H1 (cell line): ENCODE measurements at regions of chr7 and their contacts with region 1.

Region 1: DNA sequence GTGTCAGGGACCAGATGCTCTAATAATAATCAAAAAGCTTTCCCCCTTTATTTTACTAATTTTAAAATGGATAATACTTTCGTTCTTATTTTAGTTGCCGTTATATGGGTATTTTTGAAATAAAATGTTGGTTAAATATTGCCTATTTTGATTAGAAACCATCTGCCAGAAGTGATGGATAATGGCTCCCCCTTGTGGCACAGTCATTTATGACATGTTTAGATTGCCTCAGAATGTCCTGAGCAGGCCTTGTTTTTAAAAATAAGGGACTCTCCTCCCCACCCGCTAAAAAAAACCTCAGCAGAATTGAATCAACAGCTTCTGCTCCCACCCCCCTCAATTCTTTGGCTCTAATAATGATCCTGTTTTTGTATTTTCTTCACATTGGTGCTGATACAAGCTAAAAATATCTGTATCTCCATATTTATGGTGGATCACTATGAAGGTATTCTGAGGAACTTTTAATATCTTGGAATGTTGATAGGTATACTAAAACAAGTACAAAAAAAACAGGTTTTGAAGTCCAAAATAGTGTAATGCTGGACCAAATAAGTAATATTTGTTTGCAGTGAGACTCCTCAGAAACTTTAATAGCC is 38.8 kb downstream of the TMEM60 start:
- DNase-seq: peak; percentile 10 to 78
- H3K4me3 ChIP-seq: no peak overlapping the region
- H3K27ac ChIP-seq: no peak overlapping the region
- H3K4me1 ChIP-seq: no peaks in the 10 kb centered on the region
- H3K27me3 ChIP-seq: no peaks in the 10 kb centered on the region
- CTCF ChIP-seq: peak in 2 of 3 experiments; percentile 62 to 69; a peak in 2 of 4 replicates
- EP300 ChIP-seq: no peak
- POLR2A ChIP-seq: no peak
- RAD21 ChIP-seq: peak; percentile 84 to 88

Region 2: GRCh38 chr7:77651573-77652162 is 107.7 kb before region 1 on chr7:
- CTCF ChIA-PET with region 1: interaction called, 48 read pairs
- POLR2A ChIA-PET with region 1: interaction called, 3 read pairs
- DNase-seq: peak in 1 of 2 experiments; percentile 44
- H3K4me3 ChIP-seq: no peak overlapping the region
- H3K27ac ChIP-seq: no peak overlapping the region
- H3K4me1 ChIP-seq: no peaks in the 10 kb centered on the region
- H3K27me3 ChIP-seq: no peaks in the 10 kb centered on the region
- CTCF ChIP-seq: peak in 2 of 3 experiments; percentile 54; a peak in 2 of 4 replicates
- EP300 ChIP-seq: no peak
- POLR2A ChIP-seq: no peak
- RAD21 ChIP-seq: peak; percentile 56 to 63

Region 3: DNA sequence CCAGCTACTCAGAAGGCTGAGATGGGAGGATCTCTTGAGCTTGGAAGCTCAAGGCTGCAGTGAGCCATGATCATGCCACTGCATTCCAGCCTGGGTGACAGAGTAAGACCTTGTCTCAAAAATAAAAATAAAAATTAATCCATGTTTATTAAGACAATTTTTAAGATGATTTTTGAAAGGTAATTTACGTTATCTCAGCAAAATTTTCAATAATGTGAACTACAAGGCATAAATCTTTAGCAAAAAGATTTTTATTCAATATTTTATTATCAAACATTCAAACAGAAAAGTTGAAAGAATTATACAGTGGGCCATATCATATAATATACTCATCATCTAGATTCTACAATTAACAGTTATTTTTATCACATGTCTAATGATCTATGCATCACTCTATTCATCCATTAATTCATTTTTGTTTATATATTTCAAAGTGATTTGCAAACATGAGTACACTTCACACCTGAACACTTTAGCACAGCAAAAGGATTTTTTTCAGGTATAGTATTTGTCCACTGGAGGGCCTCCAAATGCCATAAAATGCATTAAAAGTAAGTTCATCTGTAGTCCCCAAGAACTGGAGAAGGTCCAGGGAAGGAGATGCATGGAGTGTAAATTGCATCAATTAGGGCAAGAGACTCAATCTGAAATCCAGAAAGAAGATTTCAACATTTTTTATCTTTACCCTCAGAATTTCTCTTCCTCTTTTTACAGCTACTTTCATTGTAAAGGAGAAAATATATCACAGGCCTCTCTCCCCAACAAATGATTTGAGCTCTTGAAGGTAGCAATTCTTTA is 101.8 kb before region 1 on chr7:
- CTCF ChIA-PET with region 1: interaction called, 48 read pairs
- POLR2A ChIA-PET with region 1: interaction called, 3 read pairs
- DNase-seq: no peak
- H3K4me3 ChIP-seq: no peak overlapping the region
- H3K27ac ChIP-seq: no peak overlapping the region
- H3K4me1 ChIP-seq: no peaks in the 10 kb centered on the region
- H3K27me3 ChIP-seq: no peaks in the 10 kb centered on the region
- CTCF ChIP-seq: peak in 2 of 3 experiments; percentile 30 to 45; a peak in 2 of 4 replicates
- EP300 ChIP-seq: no peak
- POLR2A ChIP-seq: no peak
- RAD21 ChIP-seq: peak; percentile 70 to 80

Region 4: GRCh38 chr7:77747178-77747577 is 12.2 kb before region 1 on chr7:
- CTCF ChIA-PET with region 1: interaction called, 11 read pairs
- POLR2A ChIA-PET with region 1: interaction called, 4 read pairs
- DNase-seq: no peak
- H3K4me3 ChIP-seq: no peak overlapping the region
- H3K27ac ChIP-seq: no peak overlapping the region
- H3K4me1 ChIP-seq: no peaks in the 10 kb centered on the region
- H3K27me3 ChIP-seq: no peaks in the 10 kb centered on the region
- CTCF ChIP-seq: no peak
- EP300 ChIP-seq: no peak
- POLR2A ChIP-seq: no peak
- RAD21 ChIP-seq: no peak

Region 5: DNA sequence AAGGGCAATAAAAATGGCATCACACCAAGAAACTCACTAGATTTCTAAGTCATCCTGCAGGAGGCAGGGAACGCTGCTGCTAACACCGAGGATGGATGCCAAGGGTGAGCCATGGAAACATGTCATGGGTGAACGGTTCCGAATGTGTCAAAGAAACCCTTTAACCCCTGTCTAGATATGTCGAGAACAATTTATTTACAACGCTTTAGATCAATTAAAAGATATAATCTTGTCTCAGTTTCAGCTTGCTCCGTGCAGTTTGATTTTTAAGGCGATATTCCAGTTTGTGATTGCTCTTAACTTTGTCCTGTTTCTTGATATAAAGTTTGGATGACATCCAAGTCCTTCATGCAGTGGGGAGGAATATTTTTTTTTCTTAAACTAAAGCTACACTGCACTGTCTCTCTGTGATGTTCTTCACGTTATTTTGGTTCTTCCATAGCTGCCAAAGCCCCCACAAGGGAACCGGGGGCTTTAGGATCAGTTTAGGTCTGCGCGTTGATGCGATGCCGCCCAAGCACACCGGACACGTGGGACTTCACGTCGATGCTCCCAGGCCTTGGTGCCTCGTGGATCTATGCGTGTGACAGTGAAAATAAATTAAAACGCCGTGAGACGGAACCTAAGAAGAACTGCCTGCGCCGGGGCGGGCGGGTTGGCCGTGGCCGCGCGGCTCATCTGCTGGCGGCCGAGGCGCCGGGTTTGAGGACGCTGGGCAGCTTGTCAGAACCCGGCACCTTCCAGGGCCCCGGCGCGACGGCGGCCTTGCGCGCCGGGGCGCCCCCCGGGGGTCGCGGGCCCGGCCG is 259.5 kb after region 1 on chr7:
- CTCF ChIA-PET with region 1: no interaction called
- POLR2A ChIA-PET with region 1: no interaction called
- DNase-seq: peak in 1 of 2 experiments; percentile 51
- H3K4me3 ChIP-seq: peak overlapping the region; percentile 23 to 61 (median 45); a peak in 7 of 8 replicates
- H3K27ac ChIP-seq: no peak overlapping the region
- H3K4me1 ChIP-seq: peaks cover 0 to 11% (median 5%) of the 10 kb centered on the region in 4 experiments; a peak in 4 of 7 replicates
- H3K27me3 ChIP-seq: peaks cover 2 to 10% (median 4%) of the 10 kb centered on the region in 4 experiments; a peak in 5 of 7 replicates
- CTCF ChIP-seq: no peak
- EP300 ChIP-seq: no peak
- POLR2A ChIP-seq: no peak
- RAD21 ChIP-seq: no peak; a peak in 1 of 4 replicates